Activated T-helper 1 cell treated with anti-CD3 and anti-CD28 coated beads, Interleukin-12 subunit alpha, Interleukin-12 subunit beta, Interleukin-2, Interleukin-4 antibody, amounts not matched to agents 30 ng/mL and 10 ng/mL and 1 ng/mL, durations not matched to agents 14 hours and 24 hours and 36 hours (primary cell): ENCODE measurements at regions of chr2 and their contacts with region 1.

Region 1: DNA sequence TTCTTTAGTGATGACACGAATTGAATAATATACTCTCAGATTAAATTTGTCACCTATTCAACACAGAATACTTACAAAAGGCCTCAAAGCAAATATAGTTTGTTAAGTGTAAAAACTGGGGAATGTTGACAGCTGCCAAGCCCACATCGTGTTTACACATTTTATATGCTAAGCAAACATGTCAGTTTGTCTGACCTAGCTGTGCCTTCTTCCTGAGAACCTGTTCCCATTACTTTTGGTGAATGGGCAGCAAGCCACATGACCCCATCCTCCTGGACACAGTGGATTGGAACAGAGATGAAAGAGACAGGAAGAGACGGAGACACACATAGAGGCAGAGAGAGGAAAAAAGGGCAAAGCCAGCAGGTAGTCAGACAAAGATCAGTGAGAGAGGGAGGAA is 22.9 kb upstream of the CUL3 start:
- DNase-seq: no peak
- H3K4me3 Mint-ChIP-seq: no peak overlapping the region
- H3K27ac Mint-ChIP-seq: no peak overlapping the region
- H3K4me1 Mint-ChIP-seq: peaks cover under 1% of the 10 kb centered on the region
- H3K27me3 Mint-ChIP-seq: peaks cover 5% of the 10 kb centered on the region

Region 2: DNA sequence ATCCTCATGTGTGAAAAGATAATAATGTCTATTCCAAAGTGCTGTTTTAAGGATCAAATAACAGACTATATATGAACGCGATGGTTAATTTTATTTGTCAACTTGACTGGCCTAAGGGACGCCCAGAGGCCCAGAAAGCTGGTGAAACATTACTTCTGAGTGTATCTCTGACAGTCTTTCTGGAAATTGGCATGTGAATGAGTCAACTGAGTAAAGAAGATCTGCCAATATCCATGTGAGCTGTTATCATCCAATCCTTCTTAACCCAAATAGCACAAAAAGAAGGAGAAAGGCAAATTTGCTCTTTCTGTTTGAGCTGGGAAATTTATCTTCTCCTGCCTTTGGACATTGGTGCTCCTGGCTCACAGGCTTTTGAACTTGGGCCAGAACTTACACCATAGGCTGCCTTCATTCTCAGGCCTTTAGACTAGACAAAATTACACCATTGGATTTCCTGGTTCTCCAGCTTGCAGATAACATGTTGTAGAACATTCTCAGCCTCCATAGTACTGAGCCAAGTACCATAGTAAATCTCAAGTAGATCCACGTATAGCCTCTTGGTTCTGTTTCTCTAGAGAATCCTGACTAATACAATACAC is 548.8 kb after region 1 on chr2:
- intact Hi-C with region 1: loop called (anchors 10 kb)
- DNase-seq: no peak
- H3K4me3 Mint-ChIP-seq: no peak overlapping the region
- H3K27ac Mint-ChIP-seq: no peak overlapping the region
- H3K4me1 Mint-ChIP-seq: no peaks in the 10 kb centered on the region
- H3K27me3 Mint-ChIP-seq: peaks cover 6% of the 10 kb centered on the region